Psoas muscle (tissue), 8 donors: ENCODE measurements at regions of chr10 and their contacts with region 1.

Region 1: GRCh38 chr10:68720793-68721672 is at the start of gene CCAR1:
- DNase-seq: peak; percentile 97 to 99
- ATAC-seq: peak; percentile 97 to 98 (median 97)
- H3K4me3 ChIP-seq: peak within 1 kb of the TSS; percentile 91
- H3K27ac ChIP-seq: peak within 1 kb of the TSS; percentile 94
- H3K4me1 ChIP-seq: peaks cover 10% of the 10 kb centered on the region
- H3K27me3 ChIP-seq: no peaks in the 10 kb centered on the region
- CTCF ChIP-seq: no peak
- total RNA-seq, gene CCAR1: 24.1 to 52.8 (median 34.0) TPM

Region 2: DNA sequence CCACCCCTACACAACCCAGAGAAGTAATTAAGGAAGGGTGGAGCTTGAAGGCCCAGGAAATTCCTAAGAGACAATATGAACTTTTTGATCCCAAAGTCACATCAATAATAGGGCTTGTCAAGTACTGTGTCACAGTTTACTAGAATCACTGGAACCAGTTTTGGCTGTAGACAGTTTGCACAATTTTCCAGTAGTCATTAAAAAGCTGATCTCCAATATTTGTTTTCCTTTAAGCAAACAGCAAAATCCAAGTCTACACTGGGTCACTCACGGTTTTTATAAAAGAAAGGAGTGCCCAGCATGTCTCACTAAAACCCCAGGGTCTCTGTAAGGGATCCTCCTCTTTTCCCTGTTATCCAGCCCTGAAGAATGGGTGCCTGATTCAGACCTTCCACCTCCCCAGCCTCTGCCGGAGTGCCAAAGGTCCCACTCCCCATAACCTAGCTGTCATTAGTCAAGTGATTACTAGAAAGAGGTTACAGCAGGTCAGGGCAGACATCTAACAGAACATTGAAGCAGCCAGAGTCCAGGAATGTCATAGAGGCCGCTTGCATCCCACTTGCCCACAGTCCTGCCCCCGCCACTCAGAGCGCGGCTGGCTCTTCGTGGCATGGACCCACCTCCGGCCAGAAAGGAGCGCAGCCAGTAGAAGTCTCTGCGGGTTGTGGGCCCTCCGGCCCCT is 194.3 kb before region 1 on chr10:
- intact Hi-C with region 1: loop called in 1 of 2 experiments (anchors 5 kb)
- DNase-seq: no peak
- ATAC-seq: peak; percentile 65 to 75 (median 70)
- H3K4me3 ChIP-seq: peak overlapping the region; percentile 94
- H3K27ac ChIP-seq: peak overlapping the region; percentile 96
- H3K4me1 ChIP-seq: peaks cover 7% of the 10 kb centered on the region
- H3K27me3 ChIP-seq: no peaks in the 10 kb centered on the region
- CTCF ChIP-seq: no peak

Region 3: DNA sequence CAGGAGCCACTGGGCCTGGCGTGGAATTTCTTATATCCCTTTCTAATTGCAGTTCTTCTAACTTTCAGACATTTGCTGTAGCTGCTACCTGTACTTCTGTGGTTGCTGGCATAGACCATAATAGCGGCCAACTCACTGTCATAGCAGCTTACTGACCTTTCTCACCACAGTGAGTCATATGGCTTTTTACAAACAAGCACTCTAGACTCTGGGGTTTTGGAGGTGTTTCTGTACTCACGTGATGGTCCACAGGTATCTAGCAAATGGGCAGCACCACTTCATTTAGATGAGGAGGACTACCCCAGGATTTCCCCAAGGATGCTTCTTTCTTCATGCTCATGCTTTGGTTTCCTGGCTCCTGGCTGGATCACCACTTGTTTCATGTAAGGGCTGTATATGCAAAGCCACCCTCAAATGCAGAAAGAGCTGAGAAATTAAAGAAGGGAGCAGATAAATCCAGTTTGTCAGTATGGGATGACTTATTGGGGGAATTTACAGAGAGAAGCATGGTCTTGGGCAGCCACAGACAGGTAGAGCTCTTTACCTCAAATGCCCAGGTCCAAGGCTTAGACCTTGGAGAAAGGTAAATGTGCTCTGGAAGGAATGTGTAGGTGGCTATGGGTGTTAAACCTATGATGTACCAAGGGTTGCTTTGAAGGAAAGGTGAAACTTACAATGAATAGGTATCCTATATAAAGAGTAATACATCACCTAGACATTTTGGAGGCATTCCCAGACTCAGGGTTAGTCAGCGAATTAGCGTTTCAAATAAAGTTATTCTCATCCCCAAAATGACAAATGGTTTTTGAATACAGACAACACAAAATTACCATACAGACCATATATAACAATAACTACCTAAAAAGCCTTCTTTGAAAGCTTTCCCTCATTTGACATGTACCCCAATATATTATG is 177.8 kb before region 1 on chr10:
- intact Hi-C with region 1: loop called in 1 of 2 experiments (anchors 10 kb)
- DNase-seq: no peak
- ATAC-seq: peak; percentile 90 to 96 (median 94)
- H3K4me3 ChIP-seq: no peak overlapping the region
- H3K27ac ChIP-seq: peak overlapping the region; percentile 68
- H3K4me1 ChIP-seq: peaks cover 20% of the 10 kb centered on the region
- H3K27me3 ChIP-seq: no peaks in the 10 kb centered on the region
- CTCF ChIP-seq: no peak

Region 4: DNA sequence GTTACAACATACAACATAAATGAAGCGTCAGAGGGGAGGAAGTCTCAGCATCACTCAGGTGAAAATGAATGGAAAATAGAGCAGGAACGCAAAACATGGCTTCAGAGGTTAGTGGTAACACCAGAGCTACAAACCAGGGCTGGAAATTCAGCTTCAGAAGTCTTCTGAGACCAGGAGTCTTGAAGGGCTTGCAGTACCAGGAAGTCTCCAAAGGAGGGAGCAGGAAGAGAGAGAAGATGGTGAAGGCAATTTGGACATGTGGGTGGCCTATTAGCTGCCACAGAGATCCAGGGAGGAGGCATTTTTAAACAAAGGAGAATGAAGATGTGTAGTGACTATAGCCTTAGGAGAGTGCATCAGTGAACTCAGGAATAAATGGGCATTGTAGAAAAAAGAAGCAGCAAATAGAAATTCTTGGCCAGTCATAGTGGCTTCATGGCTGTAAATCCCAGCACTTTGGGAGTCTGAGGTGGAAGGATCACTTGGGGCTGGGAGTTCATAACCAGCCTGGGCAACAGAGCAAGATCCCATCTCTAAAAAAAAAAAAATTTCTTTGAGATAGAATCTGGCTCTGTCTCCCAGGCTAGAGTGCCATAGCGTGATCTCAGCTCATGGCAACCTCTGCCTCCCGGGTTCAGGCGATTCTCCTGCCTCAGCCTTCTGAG is 170.2 kb before region 1 on chr10:
- intact Hi-C with region 1: loop called (anchors 10 kb)
- DNase-seq: no peak
- ATAC-seq: peak; percentile 76 to 92 (median 80)
- H3K4me3 ChIP-seq: no peak overlapping the region
- H3K27ac ChIP-seq: no peak overlapping the region
- H3K4me1 ChIP-seq: no peaks in the 10 kb centered on the region
- H3K27me3 ChIP-seq: no peaks in the 10 kb centered on the region
- CTCF ChIP-seq: peak; percentile 78

Region 5: GRCh38 chr10:68759967-68760366 is 38.9 kb after region 1 on chr10:
- intact Hi-C with region 1: no loop called
- DNase-seq: no peak
- ATAC-seq: no peak
- H3K4me3 ChIP-seq: no peak overlapping the region
- H3K27ac ChIP-seq: no peak overlapping the region
- H3K4me1 ChIP-seq: no peaks in the 10 kb centered on the region
- H3K27me3 ChIP-seq: no peaks in the 10 kb centered on the region
- CTCF ChIP-seq: no peak

Region 6: DNA sequence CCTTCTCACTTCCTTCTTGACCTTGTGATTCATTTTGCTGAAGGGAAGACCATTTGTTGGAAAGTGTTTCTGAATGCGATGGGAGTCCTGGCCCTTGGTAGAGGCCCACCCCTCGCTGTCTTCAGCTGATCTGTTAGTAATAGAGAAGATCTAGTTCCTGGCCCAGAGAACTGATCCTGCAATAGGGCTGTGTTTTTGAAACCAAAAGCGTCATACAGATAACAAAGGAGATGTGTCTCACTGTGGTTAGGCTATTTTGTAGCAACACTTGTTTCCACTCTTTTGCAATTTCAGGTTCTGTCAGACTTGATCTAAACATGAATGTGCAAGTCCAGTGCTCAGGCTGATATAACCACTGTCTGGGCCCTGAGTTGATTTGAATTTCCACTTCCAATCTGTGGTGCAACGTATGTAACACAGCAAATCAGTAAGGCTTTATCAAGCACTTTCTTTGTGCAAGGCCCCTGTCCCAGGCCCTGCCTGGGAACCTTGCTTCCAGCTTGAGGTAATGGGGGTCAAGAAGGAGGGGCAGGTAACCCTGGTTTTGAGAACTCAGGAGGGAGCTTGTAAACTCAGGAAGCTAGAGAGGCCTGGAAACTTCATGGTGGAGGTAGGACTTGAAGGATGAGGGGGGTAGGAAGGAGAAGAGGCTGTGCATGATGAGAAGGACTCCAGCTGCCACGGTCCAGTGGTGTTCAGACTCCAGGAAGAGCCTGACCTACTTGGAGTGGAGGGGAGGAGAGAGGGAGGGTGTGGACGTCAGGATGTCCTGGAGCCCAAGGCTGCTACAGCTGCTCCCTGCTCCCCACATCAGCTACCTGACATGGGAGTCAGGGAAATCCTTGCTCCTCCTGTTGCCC is 324.6 kb after region 1 on chr10:
- intact Hi-C with region 1: no loop called
- DNase-seq: no peak
- ATAC-seq: no peak
- H3K4me3 ChIP-seq: no peak overlapping the region
- H3K27ac ChIP-seq: no peak overlapping the region
- H3K4me1 ChIP-seq: no peaks in the 10 kb centered on the region
- H3K27me3 ChIP-seq: no peaks in the 10 kb centered on the region
- CTCF ChIP-seq: no peak